ENCODE measurements at regions of chr4 and their contacts with region 1.

Region 1: GRCh38 chr4:82284858-82285805 is 88.7 kb downstream of the HNRNPD start:
- DNase-seq: peak; percentile 96
- ATAC-seq: peak; percentile 100
- H3K4me3 ChIP-seq: peak overlapping the region; percentile 65
- H3K27ac ChIP-seq: no peak overlapping the region
- H3K4me1 ChIP-seq: no peaks in the 10 kb centered on the region
- H3K27me3 ChIP-seq: no peaks in the 10 kb centered on the region
- CTCF ChIP-seq: peak; percentile 72

Region 2: GRCh38 chr4:82360298-82361177 is 75.4 kb after region 1 on chr4:
- CTCF ChIA-PET with region 1: no interaction called
- POLR2A ChIA-PET with region 1: no interaction called
- intact Hi-C with region 1: loop called (anchors 5 kb)
- DNase-seq: peak; percentile 40
- ATAC-seq: peak; percentile 46
- H3K4me3 ChIP-seq: no peak overlapping the region
- H3K27ac ChIP-seq: no peak overlapping the region
- H3K4me1 ChIP-seq: no peaks in the 10 kb centered on the region
- H3K27me3 ChIP-seq: no peaks in the 10 kb centered on the region
- CTCF ChIP-seq: peak; percentile 63